ENCODE measurements at regions of chrX and their contacts with region 1.

Region 1: DNA sequence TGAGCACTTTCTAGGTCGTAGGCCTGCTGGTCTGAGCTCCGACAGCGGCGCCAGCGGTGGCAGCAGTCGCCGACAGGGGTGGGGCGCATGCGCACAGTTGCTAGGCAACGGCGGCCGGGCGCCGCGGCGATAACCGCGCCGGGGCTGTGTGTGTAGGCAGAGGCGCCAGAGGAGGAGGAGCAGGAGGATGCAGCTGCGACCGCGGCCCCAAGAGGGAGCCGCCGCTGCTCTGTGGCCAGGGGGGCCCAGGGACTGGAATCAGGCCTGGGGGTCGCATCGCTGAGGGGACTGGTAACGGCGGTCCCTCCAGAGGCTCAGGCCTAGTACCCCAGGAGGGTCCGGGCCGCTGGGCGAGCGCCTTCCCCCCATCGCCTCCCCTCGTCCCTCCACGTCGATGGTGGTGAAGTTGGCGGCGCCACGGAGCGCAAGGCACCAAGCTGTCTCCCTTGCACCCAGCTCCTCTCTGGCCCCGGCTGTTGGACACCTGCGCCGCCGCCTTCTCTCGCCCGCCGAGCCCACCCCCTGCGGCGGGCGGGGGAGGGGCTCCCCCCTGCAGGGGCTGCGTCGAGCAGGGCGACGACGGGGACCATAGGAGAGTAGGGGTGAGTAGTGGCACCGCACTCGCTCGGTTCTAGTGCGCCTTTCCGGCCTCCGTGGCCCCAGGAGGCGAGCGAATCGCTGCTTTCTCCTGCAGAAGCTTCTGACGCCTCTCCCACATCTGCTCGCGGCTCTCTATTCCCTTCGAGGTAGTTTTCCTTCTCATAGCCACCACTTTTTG is 58.6 kb upstream of the ZC4H2 start:
- DNase-seq: peak; percentile 76
- ATAC-seq: peak; percentile 91
- H3K4me3 Mint-ChIP-seq: peak within 1 kb of the TSS; percentile 94
- H3K27ac Mint-ChIP-seq: peak within 1 kb of the TSS; percentile 92
- H3K4me1 Mint-ChIP-seq: peaks cover 14% of the 10 kb centered on the region
- H3K27me3 Mint-ChIP-seq: no peaks in the 10 kb centered on the region
- CTCF ChIP-seq: no peak

Region 2: DNA sequence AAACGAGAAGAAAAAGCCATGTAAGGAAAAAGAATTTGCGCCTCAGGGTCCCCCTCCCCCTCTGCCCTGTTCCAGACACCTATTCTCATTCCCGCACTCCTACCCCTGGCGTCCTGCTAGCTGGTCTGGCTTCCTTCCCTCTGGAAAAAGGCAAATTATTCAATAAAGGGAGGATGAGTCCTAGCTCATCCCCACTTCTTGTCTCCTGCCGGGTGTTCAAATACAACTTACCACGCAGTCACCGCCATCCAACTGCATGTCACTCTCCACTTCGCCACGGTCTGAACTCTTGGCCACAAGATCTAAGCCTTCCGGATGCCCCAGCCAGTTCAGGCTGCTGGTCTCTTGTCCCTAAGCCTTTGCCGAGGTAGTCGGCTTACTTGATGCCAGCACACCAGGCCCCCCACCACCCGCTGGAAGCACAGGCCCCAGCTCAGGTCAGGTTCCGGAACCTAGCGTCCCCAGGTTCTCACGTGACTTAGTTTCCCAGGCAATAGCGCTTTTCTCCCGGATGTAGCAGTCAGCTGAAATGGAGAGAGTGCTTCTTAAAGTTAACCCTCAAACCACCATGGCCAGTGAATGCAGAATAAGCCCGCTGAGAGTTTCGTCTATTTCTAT is 1474.1 kb before region 1 on chrX:
- CTCF ChIA-PET with region 1: no interaction called
- POLR2A ChIA-PET with region 1: no interaction called
- intact Hi-C with region 1: loop called (anchors 2 kb)
- DNase-seq: peak; percentile 34
- ATAC-seq: peak; percentile 78
- H3K4me3 Mint-ChIP-seq: peak overlapping the region; percentile 97
- H3K27ac Mint-ChIP-seq: peak overlapping the region; percentile 87
- H3K4me1 Mint-ChIP-seq: peaks cover 27% of the 10 kb centered on the region
- H3K27me3 Mint-ChIP-seq: no peaks in the 10 kb centered on the region
- CTCF ChIP-seq: no peak

Region 3: DNA sequence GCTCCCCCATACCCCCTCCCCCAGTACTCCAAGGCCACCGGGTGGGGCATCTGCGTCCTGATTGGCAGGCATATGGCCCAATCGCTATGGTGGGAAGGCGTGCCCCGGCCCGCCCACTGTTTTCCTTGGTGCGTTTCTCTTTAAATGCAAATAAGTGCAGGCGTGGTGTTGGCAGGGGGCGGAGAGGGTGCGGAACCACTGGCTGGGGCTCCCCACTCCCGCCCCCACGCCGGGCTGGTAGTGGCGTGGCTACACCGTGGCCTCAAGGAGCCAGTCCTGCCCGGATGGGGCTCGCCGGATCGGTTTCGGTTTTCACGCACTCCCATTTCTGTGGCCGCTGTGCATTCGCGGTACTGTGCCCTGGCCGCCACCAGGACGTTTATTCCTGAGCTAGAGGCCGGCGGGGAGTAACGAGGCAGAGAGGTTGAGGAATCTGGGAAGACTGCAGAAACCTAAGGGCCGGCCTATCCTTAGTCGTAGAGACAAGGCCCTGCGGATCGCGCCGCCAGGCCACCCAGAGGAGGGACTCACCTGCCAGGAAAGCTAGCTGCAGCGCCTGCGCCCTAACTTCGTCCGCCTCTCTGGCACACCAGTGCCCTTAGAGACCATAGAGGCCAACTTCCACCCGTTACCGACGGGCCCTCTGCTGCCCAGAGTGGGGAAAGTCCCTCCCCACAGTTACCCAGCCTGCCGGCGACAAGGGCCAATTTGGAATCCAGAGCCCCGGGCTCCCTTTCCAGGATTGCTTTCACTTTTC is 828.9 kb before region 1 on chrX:
- CTCF ChIA-PET with region 1: no interaction called
- POLR2A ChIA-PET with region 1: no interaction called
- intact Hi-C with region 1: loop called (anchors 1 kb)
- DNase-seq: peak; percentile 75
- ATAC-seq: peak; percentile 88
- H3K4me3 Mint-ChIP-seq: peak overlapping the region; percentile 92
- H3K27ac Mint-ChIP-seq: peak overlapping the region; percentile 95
- H3K4me1 Mint-ChIP-seq: peaks cover 18% of the 10 kb centered on the region
- H3K27me3 Mint-ChIP-seq: no peaks in the 10 kb centered on the region
- CTCF ChIP-seq: no peak

Region 4: GRCh38 chrX:64842492-64842891 is 192.4 kb before region 1 on chrX:
- CTCF ChIA-PET with region 1: no interaction called
- POLR2A ChIA-PET with region 1: no interaction called
- intact Hi-C with region 1: loop called (anchors 5 kb)
- DNase-seq: no peak
- ATAC-seq: peak; percentile 75
- H3K4me3 Mint-ChIP-seq: peak overlapping the region; percentile 41
- H3K27ac Mint-ChIP-seq: peak overlapping the region; percentile 82
- H3K4me1 Mint-ChIP-seq: peaks cover 32% of the 10 kb centered on the region
- H3K27me3 Mint-ChIP-seq: no peaks in the 10 kb centered on the region
- CTCF ChIP-seq: no peak

Region 5: GRCh38 chrX:64975989-64976672 is 58.7 kb before region 1 on chrX and contains the start of gene ZC4H2:
- CTCF ChIA-PET with region 1: interaction called, 3 read pairs
- POLR2A ChIA-PET with region 1: interaction called, 12 read pairs
- intact Hi-C with region 1: loop called (anchors 1 kb)
- DNase-seq: peak; percentile 38
- ATAC-seq: peak; percentile 99
- H3K4me3 Mint-ChIP-seq: peak within 1 kb of the TSS; percentile 94
- H3K27ac Mint-ChIP-seq: peak within 1 kb of the TSS; percentile 76
- H3K4me1 Mint-ChIP-seq: peaks cover 23% of the 10 kb centered on the region
- H3K27me3 Mint-ChIP-seq: no peaks in the 10 kb centered on the region
- CTCF ChIP-seq: no peak
- total RNA-seq, gene ZC4H2: 7.2 and 11.0 TPM in 2 replicates

Region 6: GRCh38 chrX:65045001-65045400 is 10.1 kb after region 1 on chrX:
- CTCF ChIA-PET with region 1: no interaction called
- POLR2A ChIA-PET with region 1: no interaction called
- intact Hi-C with region 1: no loop called
- DNase-seq: no peak
- ATAC-seq: no peak
- H3K4me3 Mint-ChIP-seq: no peak overlapping the region
- H3K27ac Mint-ChIP-seq: no peak overlapping the region
- H3K4me1 Mint-ChIP-seq: peaks cover 6% of the 10 kb centered on the region
- H3K27me3 Mint-ChIP-seq: no peaks in the 10 kb centered on the region
- CTCF ChIP-seq: no peak

Region 7: DNA sequence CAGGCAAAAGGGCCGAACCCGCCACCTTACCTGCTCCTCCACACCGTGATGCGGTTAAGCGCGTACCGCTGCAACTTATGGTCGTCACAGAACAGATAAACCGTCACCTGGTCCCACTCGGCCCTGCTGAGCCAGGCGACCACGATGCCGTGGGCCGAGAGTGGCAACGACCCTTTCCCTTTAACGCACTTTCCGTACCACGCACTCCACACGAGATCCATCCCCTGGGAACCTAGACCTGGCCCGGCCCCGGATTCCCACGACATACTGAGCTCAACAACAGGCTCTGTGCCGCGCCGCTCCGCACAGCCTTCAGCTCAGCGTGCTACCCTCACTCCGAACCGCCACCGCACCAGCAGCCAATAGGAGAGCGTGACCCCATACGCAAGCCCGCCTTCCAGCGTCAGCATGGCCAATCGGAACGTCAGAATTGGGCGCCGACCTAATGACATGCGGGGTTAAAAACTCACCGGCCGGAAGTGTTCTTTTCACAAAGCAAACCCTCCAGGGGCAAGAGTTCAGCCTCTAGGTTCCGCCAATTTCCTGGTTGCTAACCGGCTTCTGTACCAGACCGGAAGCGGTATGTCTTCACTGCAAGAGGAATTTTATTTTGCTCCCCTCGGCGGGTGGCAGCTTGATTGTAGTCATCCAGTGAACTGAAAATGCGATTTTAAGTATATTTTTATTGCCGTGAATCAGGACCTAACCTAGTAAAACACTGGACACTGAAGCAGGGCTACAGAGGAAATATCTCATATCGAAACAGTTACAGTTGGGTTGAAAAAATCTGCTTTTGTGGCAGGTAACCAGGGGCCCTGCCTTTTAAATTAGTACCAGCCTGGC is 499.8 kb after region 1 on chrX and contains the start of gene LAS1L:
- CTCF ChIA-PET with region 1: no interaction called
- POLR2A ChIA-PET with region 1: interaction called, 9 read pairs
- intact Hi-C with region 1: loop called (anchors 2 kb)
- DNase-seq: peak; percentile 77
- ATAC-seq: peak; percentile 99
- H3K4me3 Mint-ChIP-seq: peak within 1 kb of the TSS; percentile 100
- H3K27ac Mint-ChIP-seq: peak within 1 kb of the TSS; percentile 98
- H3K4me1 Mint-ChIP-seq: peaks cover 23% of the 10 kb centered on the region
- H3K27me3 Mint-ChIP-seq: no peaks in the 10 kb centered on the region
- CTCF ChIP-seq: no peak
- total RNA-seq, gene LAS1L: 51.9 and 54.0 TPM in 2 replicates